CD14-positive monocyte (primary cell): ENCODE measurements at regions of chr5 and their contacts with region 1.

Region 1: DNA sequence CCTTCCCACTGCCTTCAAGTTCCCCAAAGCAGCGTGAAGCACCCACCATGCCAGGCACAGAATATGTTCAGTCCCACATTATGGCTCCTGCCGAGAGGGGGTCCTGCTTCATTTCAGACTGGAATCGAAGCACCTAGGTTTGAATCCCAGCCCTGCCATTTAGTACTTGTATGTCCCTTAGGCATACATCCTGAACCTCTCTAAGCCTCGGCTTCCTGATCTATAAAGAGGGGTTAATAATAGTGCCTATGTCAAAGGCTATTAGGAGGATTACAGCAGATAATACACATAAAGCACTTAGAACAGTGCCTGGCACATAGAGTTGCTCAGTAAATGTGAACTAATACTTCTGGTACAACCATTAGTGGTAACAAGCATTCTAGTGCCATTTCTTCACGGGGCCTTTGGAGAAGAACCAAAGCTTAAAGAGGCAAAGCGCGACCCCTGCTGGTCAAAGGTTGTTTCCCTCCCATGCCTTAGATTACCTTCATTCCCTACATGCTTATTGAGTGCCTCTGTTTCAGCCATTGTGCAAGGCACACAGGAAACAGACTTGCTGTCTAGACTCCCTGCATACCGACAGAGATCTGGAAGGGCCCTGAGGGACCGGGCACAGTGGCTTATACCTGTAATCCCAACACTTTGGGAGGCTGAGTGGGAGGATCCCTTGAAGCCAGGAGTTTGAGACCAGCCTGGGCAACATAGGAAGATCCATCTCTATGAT is 98.2 kb downstream of the PPARGC1B start:
- DNase-seq: peak; percentile 64 to 84 (median 74)
- H3K4me3 ChIP-seq: no peak overlapping the region
- H3K4me3 Mint-ChIP-seq: no peak overlapping the region
- H3K27ac ChIP-seq: no peak overlapping the region
- H3K27ac Mint-ChIP-seq: peak overlapping the region in 6 of 7 donors; percentile 11 to 79 (median 50)
- H3K4me1 ChIP-seq: peaks cover 0 to 2% of the 10 kb centered on the region in 2 donors
- H3K4me1 Mint-ChIP-seq: peaks cover 4% of the 10 kb centered on the region
- H3K27me3 ChIP-seq: no peaks in the 10 kb centered on the region
- H3K27me3 Mint-ChIP-seq: no peaks in the 10 kb centered on the region
- CTCF ChIP-seq: peak; percentile 88

Region 2: GRCh38 chr5:149636851-149637246 is 191.5 kb before region 1 on chr5:
- intact Hi-C with region 1: loop called (anchors 1 kb)
- DNase-seq: peak; percentile 10 to 67 (median 58)
- H3K4me3 ChIP-seq: no peak overlapping the region
- H3K4me3 Mint-ChIP-seq: no peak overlapping the region
- H3K27ac ChIP-seq: no peak overlapping the region
- H3K27ac Mint-ChIP-seq: no peak overlapping the region
- H3K4me1 ChIP-seq: peaks cover 0 to 4% of the 10 kb centered on the region in 2 donors
- H3K4me1 Mint-ChIP-seq: peaks cover 11% of the 10 kb centered on the region
- H3K27me3 ChIP-seq: no peaks in the 10 kb centered on the region
- H3K27me3 Mint-ChIP-seq: peaks cover 0 to 2% (median 0%) of the 10 kb centered on the region in 3 donors
- CTCF ChIP-seq: peak; percentile 91

Region 3: GRCh38 chr5:149656576-149657182 is 171.6 kb before region 1 on chr5:
- intact Hi-C with region 1: loop called in 1 of 2 experiments (anchors 5 kb)
- DNase-seq: peak in 2 of 3 donors; percentile 54 to 72
- H3K4me3 ChIP-seq: no peak overlapping the region
- H3K4me3 Mint-ChIP-seq: no peak overlapping the region
- H3K27ac ChIP-seq: no peak overlapping the region
- H3K27ac Mint-ChIP-seq: no peak overlapping the region
- H3K4me1 ChIP-seq: no peaks in the 10 kb centered on the region
- H3K4me1 Mint-ChIP-seq: peaks cover 3% of the 10 kb centered on the region
- H3K27me3 ChIP-seq: no peaks in the 10 kb centered on the region
- H3K27me3 Mint-ChIP-seq: peaks cover 0 to 4% (median 0%) of the 10 kb centered on the region in 3 donors
- CTCF ChIP-seq: peak; percentile 96

Region 4: GRCh38 chr5:149731639-149732323 is 96.5 kb before region 1 on chr5:
- intact Hi-C with region 1: loop called in 1 of 2 experiments (anchors 10 kb)
- DNase-seq: peak; percentile 56 to 81 (median 73)
- H3K4me3 ChIP-seq: peak overlapping the region; percentile 82 to 99 (median 95)
- H3K4me3 Mint-ChIP-seq: peak overlapping the region; percentile 88 to 91
- H3K27ac ChIP-seq: peak overlapping the region; percentile 67 to 84
- H3K27ac Mint-ChIP-seq: peak overlapping the region; percentile 69 to 89 (median 84)
- H3K4me1 ChIP-seq: peaks cover 40 to 45% of the 10 kb centered on the region in 2 donors
- H3K4me1 Mint-ChIP-seq: peaks cover 50% of the 10 kb centered on the region
- H3K27me3 ChIP-seq: no peaks in the 10 kb centered on the region
- H3K27me3 Mint-ChIP-seq: no peaks in the 10 kb centered on the region
- CTCF ChIP-seq: no peak